Prostate gland (tissue), 2 donors: ENCODE measurements at regions of chr2 and their contacts with region 1.

Region 1: GRCh38 chr2:73071360-73072133 is at the start of gene SFXN5:
- DNase-seq: peak; percentile 98
- H3K4me3 ChIP-seq: peak within 1 kb of the TSS; percentile 80 to 82
- H3K27ac ChIP-seq: peak within 1 kb of the TSS; percentile 76 to 87
- H3K4me1 ChIP-seq: peaks cover 2% of the 10 kb centered on the region
- H3K27me3 ChIP-seq: no peaks in the 10 kb centered on the region
- CTCF ChIP-seq: peak in 3 of 4 experiments; percentile 20 to 49 (median 34)
- POLR2A ChIP-seq: no peak
- total RNA-seq, gene SFXN5: 12.8 to 23.2 TPM

Region 2: GRCh38 chr2:73053316-73054114 is 18.0 kb before region 1 on chr2:
- intact Hi-C with region 1: no loop called
- DNase-seq: no peak
- H3K4me3 ChIP-seq: no peak overlapping the region
- H3K27ac ChIP-seq: no peak overlapping the region
- H3K4me1 ChIP-seq: no peaks in the 10 kb centered on the region
- H3K27me3 ChIP-seq: no peaks in the 10 kb centered on the region
- CTCF ChIP-seq: no peak
- POLR2A ChIP-seq: no peak

Region 3: DNA sequence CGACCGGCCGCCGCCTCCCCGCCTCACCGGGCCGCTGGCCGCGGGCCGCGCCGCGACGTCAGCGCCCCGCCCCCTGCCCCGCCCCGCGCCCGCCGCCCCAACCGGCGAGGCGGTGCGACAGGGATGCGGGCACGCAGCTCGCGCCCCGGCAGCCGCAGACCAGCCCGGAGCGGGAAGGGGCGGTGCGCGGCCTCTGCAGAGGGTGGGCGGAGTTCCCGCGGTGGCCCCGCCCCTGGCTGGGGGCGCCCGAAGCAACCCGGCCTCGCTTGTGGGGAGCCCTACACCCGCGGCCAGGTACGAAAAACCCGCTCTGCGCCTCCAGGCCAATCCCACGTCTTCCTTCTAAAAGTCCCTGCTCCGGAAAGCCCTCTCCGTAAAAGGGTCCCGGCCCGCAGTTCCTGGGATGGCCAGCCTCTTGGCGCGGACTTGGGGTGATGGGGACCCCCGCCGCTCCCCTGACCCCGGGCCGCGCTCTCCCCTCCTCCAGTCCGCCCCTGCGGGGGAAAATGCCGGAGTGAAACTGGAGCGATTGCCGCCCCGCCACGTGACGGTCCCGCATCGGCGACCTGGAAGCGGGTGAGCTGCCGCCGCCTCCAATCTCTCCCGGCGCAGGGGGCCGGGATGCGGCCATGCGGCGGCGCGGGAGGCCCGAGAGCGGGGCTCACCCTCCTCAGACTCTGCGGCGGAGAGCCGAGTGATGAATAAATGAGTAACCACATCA is 41.5 kb after region 1 on chr2 and contains the start of gene RAB11FIP5:
- intact Hi-C with region 1: loop called (anchors 2 kb)
- DNase-seq: peak; percentile 74
- H3K4me3 ChIP-seq: peak within 1 kb of the TSS; percentile 80
- H3K27ac ChIP-seq: peak within 1 kb of the TSS; percentile 81 to 90
- H3K4me1 ChIP-seq: peaks cover 10% of the 10 kb centered on the region
- H3K27me3 ChIP-seq: no peaks in the 10 kb centered on the region
- CTCF ChIP-seq: peak in 3 of 4 experiments; percentile 4 to 20 (median 17)
- POLR2A ChIP-seq: peak; percentile 21
- total RNA-seq, gene RAB11FIP5: 24.1 to 47.7 TPM